ENCODE measurements at regions of chr2 and their contacts with region 1.

Region 1: DNA sequence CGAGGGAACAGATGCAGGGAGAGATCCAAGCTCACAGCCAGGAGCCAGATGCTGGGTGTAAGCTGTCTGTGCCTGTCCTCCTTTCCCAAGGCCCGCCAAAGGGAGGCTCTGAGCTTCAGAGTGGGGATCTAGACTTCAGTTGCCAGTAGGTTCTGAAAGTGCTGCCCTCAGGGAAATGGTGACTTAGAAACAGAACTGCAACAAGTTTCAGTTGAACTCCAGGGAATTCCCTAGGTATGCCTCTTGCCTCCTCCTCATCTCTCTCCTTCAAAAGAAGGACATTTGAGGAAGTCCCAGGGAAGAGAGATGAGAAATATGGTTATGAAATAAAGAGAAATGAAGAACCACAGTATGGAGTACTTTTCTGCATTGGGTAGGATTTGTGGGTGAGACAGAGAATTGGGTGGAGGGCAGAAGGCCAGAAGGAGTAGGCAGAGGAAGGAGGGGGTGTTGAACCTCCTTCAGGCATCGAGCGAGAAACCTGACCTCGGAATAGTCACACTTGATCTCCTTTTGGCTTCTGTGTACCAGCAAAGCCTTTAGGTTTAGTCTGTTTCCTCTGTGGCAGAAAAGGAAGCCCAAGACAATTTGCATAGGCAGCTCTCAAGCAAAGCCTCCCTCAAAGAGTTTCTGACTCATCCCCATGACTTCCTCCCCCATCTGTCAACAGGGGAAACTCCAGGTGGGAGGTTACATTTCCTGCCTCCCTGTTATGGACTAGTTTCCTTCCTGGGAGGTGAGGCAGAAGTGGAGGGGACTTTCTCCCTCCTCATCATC is 45.7 kb downstream of the QPCT start:
- DNase-seq: peak; percentile 61 to 90 (median 66)
- H3K4me3 ChIP-seq: peak overlapping the region in 1 of 2 donors; percentile 4
- H3K4me3 Mint-ChIP-seq: peak overlapping the region; percentile 28 to 78 (median 57)
- H3K27ac ChIP-seq: peak overlapping the region; percentile 38
- H3K27ac Mint-ChIP-seq: peak overlapping the region in 4 of 7 donors; percentile 62 to 94 (median 88)
- H3K4me1 ChIP-seq: peaks cover 29% of the 10 kb centered on the region
- H3K4me1 Mint-ChIP-seq: peaks cover 2 to 7% (median 3%) of the 10 kb centered on the region in 4 donors
- H3K27me3 ChIP-seq: no peaks in the 10 kb centered on the region
- H3K27me3 Mint-ChIP-seq: no peaks in the 10 kb centered on the region

Region 2: GRCh38 chr2:36680012-36680411 is 710.2 kb before region 1 on chr2:
- CTCF ChIA-PET with region 1: no interaction called
- POLR2A ChIA-PET with region 1: no interaction called
- intact Hi-C with region 1: no loop called
- DNase-seq: no peak
- H3K4me3 ChIP-seq: no peak overlapping the region
- H3K4me3 Mint-ChIP-seq: no peak overlapping the region
- H3K27ac ChIP-seq: no peak overlapping the region
- H3K27ac Mint-ChIP-seq: no peak overlapping the region
- H3K4me1 ChIP-seq: no peaks in the 10 kb centered on the region
- H3K4me1 Mint-ChIP-seq: peaks cover 2 to 11% (median 6%) of the 10 kb centered on the region in 4 donors
- H3K27me3 ChIP-seq: no peaks in the 10 kb centered on the region
- H3K27me3 Mint-ChIP-seq: peaks cover 13 to 23% of the 10 kb centered on the region in 2 donors

Region 3: GRCh38 chr2:36785179-36785795 is 604.9 kb before region 1 on chr2:
- CTCF ChIA-PET with region 1: no interaction called
- POLR2A ChIA-PET with region 1: no interaction called
- intact Hi-C with region 1: loop called (anchors 10 kb)
- DNase-seq: peak; percentile 40 to 66 (median 55)
- H3K4me3 ChIP-seq: no peak overlapping the region
- H3K4me3 Mint-ChIP-seq: no peak overlapping the region
- H3K27ac ChIP-seq: no peak overlapping the region
- H3K27ac Mint-ChIP-seq: peak overlapping the region in 1 of 7 donors; percentile 13
- H3K4me1 ChIP-seq: no peaks in the 10 kb centered on the region
- H3K4me1 Mint-ChIP-seq: peaks cover 0 to 3% (median 1%) of the 10 kb centered on the region in 4 donors
- H3K27me3 ChIP-seq: no peaks in the 10 kb centered on the region
- H3K27me3 Mint-ChIP-seq: peaks cover 17 to 20% of the 10 kb centered on the region in 2 donors

Region 4: DNA sequence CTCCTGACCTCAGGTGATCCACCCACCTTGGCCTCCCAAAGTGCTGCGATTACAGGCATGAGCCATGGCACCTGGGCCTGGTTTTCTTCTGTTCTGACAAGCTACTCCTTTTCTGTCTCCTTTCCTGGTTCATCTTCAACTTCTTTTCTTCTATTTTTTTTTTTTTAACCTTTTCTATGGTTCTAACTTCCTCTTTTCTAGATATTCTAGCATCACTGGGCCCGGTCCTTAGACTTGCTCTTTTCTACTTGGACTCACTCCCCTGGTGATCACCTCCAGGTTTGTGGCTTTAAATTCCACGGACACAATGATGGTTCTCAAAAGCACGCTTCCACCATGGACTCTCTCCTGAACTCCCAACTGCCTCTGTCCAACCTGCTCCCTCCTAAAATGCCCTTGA is 235.4 kb before region 1 on chr2:
- CTCF ChIA-PET with region 1: no interaction called
- POLR2A ChIA-PET with region 1: no interaction called
- intact Hi-C with region 1: no loop called
- DNase-seq: no peak
- H3K4me3 ChIP-seq: no peak overlapping the region
- H3K4me3 Mint-ChIP-seq: peak overlapping the region; percentile 1 to 96 (median 93)
- H3K27ac ChIP-seq: no peak overlapping the region
- H3K27ac Mint-ChIP-seq: peak overlapping the region in 6 of 7 donors; percentile 70 to 95 (median 89)
- H3K4me1 ChIP-seq: peaks cover 48% of the 10 kb centered on the region
- H3K4me1 Mint-ChIP-seq: peaks cover 49 to 76% (median 65%) of the 10 kb centered on the region in 4 donors
- H3K27me3 ChIP-seq: no peaks in the 10 kb centered on the region
- H3K27me3 Mint-ChIP-seq: no peaks in the 10 kb centered on the region

Region 5: GRCh38 chr2:37324786-37325624 is 65.2 kb before region 1 on chr2 and contains the start of gene PRKD3:
- CTCF ChIA-PET with region 1: no interaction called
- POLR2A ChIA-PET with region 1: interaction called, 12 read pairs
- intact Hi-C with region 1: loop called (anchors 1 kb)
- DNase-seq: peak; percentile 70 to 74 (median 73)
- H3K4me3 ChIP-seq: peak within 1 kb of the TSS; percentile 72 to 85
- H3K4me3 Mint-ChIP-seq: peak within 1 kb of the TSS; percentile 97 to 99 (median 98)
- H3K27ac ChIP-seq: peak within 1 kb of the TSS; percentile 39
- H3K27ac Mint-ChIP-seq: peak within 1 kb of the TSS; percentile 93 to 98 (median 98)
- H3K4me1 ChIP-seq: peaks cover 36% of the 10 kb centered on the region
- H3K4me1 Mint-ChIP-seq: peaks cover 19 to 44% (median 27%) of the 10 kb centered on the region in 4 donors
- H3K27me3 ChIP-seq: no peaks in the 10 kb centered on the region
- H3K27me3 Mint-ChIP-seq: peaks cover 6 to 8% of the 10 kb centered on the region in 2 donors
- total RNA-seq, gene PRKD3: 34.6 to 37.7 TPM

Region 6: DNA sequence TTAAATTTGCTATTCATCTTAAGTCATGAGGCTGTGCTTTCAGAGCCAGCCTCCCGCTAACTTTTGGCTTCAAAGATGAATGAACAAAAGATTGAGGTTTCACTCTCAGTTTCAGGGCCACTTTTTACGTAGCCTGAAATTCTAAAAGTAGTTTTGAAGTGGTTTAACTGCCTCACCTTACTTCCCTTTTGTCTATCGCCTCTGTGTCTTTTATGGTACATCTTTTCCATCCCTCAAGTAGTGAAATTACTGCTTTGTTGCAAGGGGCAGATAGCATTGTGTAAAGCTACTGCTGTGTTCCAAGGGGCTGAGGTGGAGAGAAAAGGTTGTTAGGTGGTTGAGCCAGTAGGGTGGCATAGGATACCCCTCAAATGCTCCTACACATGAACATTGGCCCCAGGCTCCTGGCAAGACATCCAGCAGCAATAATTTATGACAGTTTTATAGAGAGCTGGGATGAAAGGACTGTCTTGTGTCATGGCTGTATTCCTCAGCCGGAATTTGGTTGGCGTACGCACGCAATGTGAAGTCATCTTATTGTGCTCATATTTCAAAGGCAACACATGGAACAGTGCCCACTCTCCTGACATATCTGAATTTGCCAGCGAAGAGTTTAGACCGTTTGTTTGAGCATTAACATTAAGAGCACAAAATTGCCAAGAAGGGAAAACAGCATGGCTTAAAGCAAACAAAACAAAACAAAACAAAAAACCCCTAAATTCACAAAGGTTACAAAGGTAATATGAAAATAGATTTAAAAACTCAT is 13.6 kb before region 1 on chr2:
- CTCF ChIA-PET with region 1: interaction called, 20 read pairs
- POLR2A ChIA-PET with region 1: interaction called, 8 read pairs
- intact Hi-C with region 1: no loop called
- DNase-seq: peak in 4 of 5 donors; percentile 58 to 63 (median 59)
- H3K4me3 ChIP-seq: no peak overlapping the region
- H3K4me3 Mint-ChIP-seq: peak overlapping the region; percentile 3 to 85 (median 72)
- H3K27ac ChIP-seq: no peak overlapping the region
- H3K27ac Mint-ChIP-seq: peak overlapping the region in 3 of 7 donors; percentile 49 to 82 (median 53)
- H3K4me1 ChIP-seq: peaks cover 20% of the 10 kb centered on the region
- H3K4me1 Mint-ChIP-seq: peaks cover 10 to 17% (median 14%) of the 10 kb centered on the region in 4 donors
- H3K27me3 ChIP-seq: peaks cover 28% of the 10 kb centered on the region
- H3K27me3 Mint-ChIP-seq: peaks cover 28 to 35% of the 10 kb centered on the region in 2 donors

Region 7: DNA sequence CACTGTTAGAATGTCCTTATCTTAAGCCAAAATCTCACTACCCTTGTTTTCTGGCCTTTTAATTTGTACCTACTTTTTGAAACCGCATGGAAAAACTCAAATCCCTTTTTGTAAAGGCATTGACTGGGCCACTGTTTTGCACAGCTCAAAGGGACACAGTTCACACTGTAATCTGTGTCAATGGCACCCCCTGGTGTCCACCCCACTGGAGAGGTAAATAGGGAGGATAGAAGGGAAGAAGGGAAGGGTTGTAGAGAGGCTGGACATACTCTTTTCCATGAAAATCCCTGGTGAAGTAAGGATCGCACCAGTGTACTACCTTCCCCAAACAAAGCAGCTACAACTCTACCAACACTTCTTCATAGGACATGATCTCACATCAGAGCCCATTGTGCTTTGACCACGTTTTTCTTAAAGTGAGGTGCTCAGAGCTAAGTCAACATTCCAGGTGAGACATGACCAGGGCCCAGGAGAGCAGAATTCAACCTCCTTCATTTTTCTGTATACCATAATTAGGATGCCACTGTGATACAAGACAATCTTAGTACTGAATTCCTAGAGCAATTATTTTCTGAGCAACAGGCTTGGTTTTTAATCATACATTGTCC is 442.5 kb after region 1 on chr2:
- CTCF ChIA-PET with region 1: interaction called, 195 read pairs
- POLR2A ChIA-PET with region 1: interaction called, 9 read pairs
- intact Hi-C with region 1: no loop called
- DNase-seq: peak; percentile 69 to 75 (median 74)
- H3K4me3 ChIP-seq: no peak overlapping the region
- H3K4me3 Mint-ChIP-seq: no peak overlapping the region
- H3K27ac ChIP-seq: no peak overlapping the region
- H3K27ac Mint-ChIP-seq: peak overlapping the region in 2 of 7 donors; percentile 16 to 48
- H3K4me1 ChIP-seq: peaks cover 16% of the 10 kb centered on the region
- H3K4me1 Mint-ChIP-seq: peaks cover 5 to 26% (median 11%) of the 10 kb centered on the region in 4 donors
- H3K27me3 ChIP-seq: no peaks in the 10 kb centered on the region
- H3K27me3 Mint-ChIP-seq: no peaks in the 10 kb centered on the region

Region 8: GRCh38 chr2:37885329-37885993 is 495.3 kb after region 1 on chr2:
- CTCF ChIA-PET with region 1: interaction called, 288 read pairs
- POLR2A ChIA-PET with region 1: no interaction called
- intact Hi-C with region 1: loop called (anchors 5 kb)
- DNase-seq: no peak
- H3K4me3 ChIP-seq: no peak overlapping the region
- H3K4me3 Mint-ChIP-seq: no peak overlapping the region
- H3K27ac ChIP-seq: no peak overlapping the region
- H3K27ac Mint-ChIP-seq: no peak overlapping the region
- H3K4me1 ChIP-seq: no peaks in the 10 kb centered on the region
- H3K4me1 Mint-ChIP-seq: peaks cover 0 to 11% (median 6%) of the 10 kb centered on the region in 4 donors
- H3K27me3 ChIP-seq: no peaks in the 10 kb centered on the region
- H3K27me3 Mint-ChIP-seq: peaks cover 19 to 21% of the 10 kb centered on the region in 2 donors

Region 9: GRCh38 chr2:38274286-38275276 is 884.4 kb after region 1 on chr2:
- CTCF ChIA-PET with region 1: interaction called, 22 read pairs
- POLR2A ChIA-PET with region 1: no interaction called
- intact Hi-C with region 1: no loop called
- DNase-seq: peak; percentile 35 to 49 (median 37)
- H3K4me3 ChIP-seq: no peak overlapping the region
- H3K4me3 Mint-ChIP-seq: no peak overlapping the region
- H3K27ac ChIP-seq: no peak overlapping the region
- H3K27ac Mint-ChIP-seq: no peak overlapping the region
- H3K4me1 ChIP-seq: no peaks in the 10 kb centered on the region
- H3K4me1 Mint-ChIP-seq: peaks cover 0 to 2% (median under 1%) of the 10 kb centered on the region in 4 donors
- H3K27me3 ChIP-seq: no peaks in the 10 kb centered on the region
- H3K27me3 Mint-ChIP-seq: peaks cover 0 to 2% of the 10 kb centered on the region in 2 donors